ENCODE measurements at regions of chr10 and their contacts with region 1.

Region 1: GRCh38 chr10:16891375-16892313 is 74.4 kb upstream of the RSU1 start:
- DNase-seq: peak; percentile 92
- ATAC-seq: peak; percentile 87
- H3K4me3 ChIP-seq: peak overlapping the region; percentile 4 to 38; a peak in 2 of 4 replicates
- H3K27ac ChIP-seq: peak overlapping the region; percentile 67
- H3K4me1 ChIP-seq: peaks cover 13 to 25% of the 10 kb centered on the region in 2 experiments; a peak in 3 of 4 replicates
- H3K27me3 ChIP-seq: no peaks in the 10 kb centered on the region
- CTCF ChIP-seq: peak; percentile 68 to 76 (median 73)
- POLR2A ChIP-seq: peak; percentile 100
- RAD21 ChIP-seq: peak; percentile 90

Region 2: DNA sequence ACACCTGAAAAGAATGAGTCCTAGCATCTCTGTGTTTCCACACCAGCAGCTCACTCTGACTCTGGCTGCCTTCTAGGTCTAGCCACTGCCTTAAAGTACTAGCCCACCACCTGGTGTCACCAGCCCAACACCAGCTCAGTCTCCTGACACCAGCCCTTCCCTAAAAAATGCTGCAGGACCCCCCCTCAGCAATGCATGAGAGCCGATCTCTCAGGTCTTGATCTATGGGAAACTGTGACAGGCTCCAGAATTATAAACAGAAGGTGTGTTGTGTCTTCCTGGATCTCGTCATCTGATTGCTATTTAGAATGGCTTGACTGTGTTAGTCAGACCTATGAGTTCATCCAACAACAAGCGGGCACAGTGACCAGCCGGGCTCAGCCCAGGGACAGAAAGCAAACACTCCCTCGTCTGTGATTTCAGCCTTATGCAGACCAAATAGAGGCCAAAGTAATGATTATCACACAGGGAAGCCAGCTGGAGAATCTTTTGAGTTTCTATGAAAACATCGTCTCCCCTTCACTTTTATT is 171.4 kb after region 1 on chr10:
- CTCF ChIA-PET with region 1: no interaction called
- POLR2A ChIA-PET with region 1: interaction called, 8 read pairs
- RAD21 ChIA-PET with region 1: no interaction called
- intact Hi-C with region 1: loop called (anchors 1 kb)
- DNase-seq: peak; percentile 86
- ATAC-seq: peak; percentile 95
- H3K4me3 ChIP-seq: peak overlapping the region; percentile 18 to 42
- H3K27ac ChIP-seq: peak overlapping the region; percentile 4; the same call in 1 of the 2 replicates
- H3K4me1 ChIP-seq: peaks cover 37 to 48% of the 10 kb centered on the region in 2 experiments
- H3K27me3 ChIP-seq: no peaks in the 10 kb centered on the region
- CTCF ChIP-seq: no peak
- POLR2A ChIP-seq: no peak
- RAD21 ChIP-seq: peak; percentile 22

Region 3: GRCh38 chr10:17200912-17201793 is 309.5 kb after region 1 on chr10 and contains the start of gene TRDMT1:
- CTCF ChIA-PET with region 1: no interaction called
- POLR2A ChIA-PET with region 1: interaction called, 28 read pairs
- RAD21 ChIA-PET with region 1: no interaction called
- intact Hi-C with region 1: no loop called
- DNase-seq: peak; percentile 69
- ATAC-seq: peak; percentile 99
- H3K4me3 ChIP-seq: peak within 1 kb of the TSS; percentile 68 to 85
- H3K27ac ChIP-seq: peak within 1 kb of the TSS; percentile 74
- H3K4me1 ChIP-seq: peaks cover 5 to 14% of the 10 kb centered on the region in 2 experiments
- H3K27me3 ChIP-seq: no peaks in the 10 kb centered on the region
- CTCF ChIP-seq: peak in 1 of 3 experiments; percentile 17; a peak in 1 of 6 replicates
- POLR2A ChIP-seq: peak; percentile 65
- RAD21 ChIP-seq: peak; percentile 54; the same call in 1 of the 2 replicates
- total RNA-seq, gene TRDMT1: 8.6 TPM

Region 4: DNA sequence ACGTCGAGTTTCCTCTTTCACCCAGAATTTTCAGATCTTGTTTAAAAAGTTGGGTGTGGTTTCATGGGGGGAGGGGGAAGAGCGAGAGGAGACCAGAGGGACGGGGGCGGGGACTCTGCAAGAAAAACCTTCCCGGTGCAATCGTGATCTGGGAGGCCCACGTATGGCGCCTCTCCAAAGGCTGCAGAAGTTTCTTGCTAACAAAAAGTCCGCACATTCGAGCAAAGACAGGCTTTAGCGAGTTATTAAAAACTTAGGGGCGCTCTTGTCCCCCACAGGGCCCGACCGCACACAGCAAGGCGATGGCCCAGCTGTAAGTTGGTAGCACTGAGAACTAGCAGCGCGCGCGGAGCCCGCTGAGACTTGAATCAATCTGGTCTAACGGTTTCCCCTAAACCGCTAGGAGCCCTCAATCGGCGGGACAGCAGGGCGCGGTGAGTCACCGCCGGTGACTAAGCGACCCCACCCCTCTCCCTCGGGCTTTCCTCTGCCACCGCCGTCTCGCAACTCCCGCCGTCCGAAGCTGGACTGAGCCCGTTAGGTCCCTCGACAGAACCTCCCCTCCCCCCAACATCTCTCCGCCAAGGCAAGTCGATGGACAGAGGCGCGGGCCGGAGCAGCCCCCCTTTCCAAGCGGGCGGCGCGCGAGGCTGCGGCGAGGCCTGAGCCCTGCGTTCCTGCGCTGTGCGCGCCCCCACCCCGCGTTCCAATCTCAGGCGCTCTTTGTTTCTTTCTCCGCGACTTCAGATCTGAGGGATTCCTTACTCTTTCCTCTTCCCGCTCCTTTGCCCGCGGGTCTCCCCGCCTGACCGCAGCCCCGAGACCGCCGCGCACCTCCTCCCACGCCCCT is 336.7 kb after region 1 on chr10 and contains the start of gene VIM:
- CTCF ChIA-PET with region 1: interaction called, 8 read pairs
- POLR2A ChIA-PET with region 1: interaction called, 25 read pairs
- RAD21 ChIA-PET with region 1: no interaction called
- intact Hi-C with region 1: loop called (anchors 1 kb)
- DNase-seq: peak; percentile 84
- ATAC-seq: peak; percentile 76
- H3K4me3 ChIP-seq: peak within 1 kb of the TSS; percentile 24 to 43
- H3K27ac ChIP-seq: peak within 1 kb of the TSS; percentile 53
- H3K4me1 ChIP-seq: peaks cover 32 to 37% of the 10 kb centered on the region in 2 experiments
- H3K27me3 ChIP-seq: peaks cover 39% of the 10 kb centered on the region
- CTCF ChIP-seq: no peak
- POLR2A ChIP-seq: no peak
- RAD21 ChIP-seq: peak; percentile 20; the same call in 1 of the 2 replicates
- total RNA-seq, gene VIM: 7.2 TPM

Region 5: GRCh38 chr10:17249820-17250219 is 358.2 kb after region 1 on chr10:
- CTCF ChIA-PET with region 1: no interaction called
- POLR2A ChIA-PET with region 1: interaction called, 10 read pairs
- RAD21 ChIA-PET with region 1: no interaction called
- intact Hi-C with region 1: loop called (anchors 2 kb)
- DNase-seq: peak; percentile 29
- ATAC-seq: peak; percentile 72
- H3K4me3 ChIP-seq: no peak overlapping the region
- H3K27ac ChIP-seq: no peak overlapping the region
- H3K4me1 ChIP-seq: no peaks in the 10 kb centered on the region
- H3K27me3 ChIP-seq: no peaks in the 10 kb centered on the region
- CTCF ChIP-seq: peak; percentile 61 to 69 (median 67); a peak in 5 of 6 replicates
- POLR2A ChIP-seq: no peak
- RAD21 ChIP-seq: peak; percentile 83

Region 6: DNA sequence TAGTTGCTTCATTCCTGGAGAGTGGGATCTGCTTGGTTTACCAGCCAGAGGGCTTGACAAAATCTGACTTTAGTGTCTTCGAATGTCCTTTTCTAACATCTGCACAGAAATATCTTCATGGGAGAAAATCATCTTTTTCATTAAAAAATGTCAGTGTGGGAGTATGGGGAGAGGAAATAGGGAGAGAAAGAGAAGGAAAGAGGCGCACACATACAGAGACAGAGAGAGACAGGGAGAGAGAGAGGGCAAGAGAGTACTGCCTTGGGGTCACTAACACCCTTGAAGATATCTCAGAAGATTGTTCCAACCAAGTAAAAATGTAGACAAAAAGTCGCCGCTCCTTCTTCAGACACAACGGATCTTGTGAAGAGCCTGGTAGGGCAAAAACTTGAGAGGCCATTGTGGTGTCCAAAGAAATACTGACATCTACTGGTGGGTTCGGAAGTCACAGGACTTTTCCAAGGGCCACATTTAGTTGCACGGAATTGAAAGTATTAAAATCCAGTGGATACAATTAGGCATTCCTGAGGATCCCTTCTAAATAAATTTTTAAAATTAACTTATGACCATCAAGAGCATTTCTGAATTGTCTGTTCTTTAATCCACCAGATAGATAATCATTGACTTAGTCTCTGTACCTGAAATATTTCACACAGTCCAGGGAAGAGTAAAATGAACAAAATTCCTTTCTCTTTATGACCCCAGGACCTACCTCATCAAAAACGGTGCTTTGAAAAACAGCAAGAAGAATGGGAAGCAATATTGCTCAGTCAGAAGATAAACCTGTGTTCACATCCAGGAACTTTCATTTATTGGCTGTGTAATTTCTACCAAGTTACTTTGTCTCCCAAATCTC is 366.1 kb after region 1 on chr10:
- CTCF ChIA-PET with region 1: interaction called, 6 read pairs
- POLR2A ChIA-PET with region 1: interaction called, 10 read pairs
- RAD21 ChIA-PET with region 1: no interaction called
- intact Hi-C with region 1: loop called (anchors 1 kb)
- DNase-seq: peak; percentile 60
- ATAC-seq: peak; percentile 94
- H3K4me3 ChIP-seq: peak overlapping the region in 1 of 2 experiments; percentile 17; a peak in 1 of 4 replicates
- H3K27ac ChIP-seq: no peak overlapping the region
- H3K4me1 ChIP-seq: peaks cover 2 to 8% of the 10 kb centered on the region in 2 experiments; a peak in 3 of 4 replicates
- H3K27me3 ChIP-seq: no peaks in the 10 kb centered on the region
- CTCF ChIP-seq: peak; percentile 74 to 83 (median 83)
- POLR2A ChIP-seq: no peak
- RAD21 ChIP-seq: peak; percentile 91

Region 7: GRCh38 chr10:17617031-17617911 is 725.6 kb after region 1 on chr10 and contains the start of gene HACD1:
- CTCF ChIA-PET with region 1: no interaction called
- POLR2A ChIA-PET with region 1: no interaction called
- RAD21 ChIA-PET with region 1: no interaction called
- intact Hi-C with region 1: no loop called
- DNase-seq: peak; percentile 59
- ATAC-seq: peak; percentile 85
- H3K4me3 ChIP-seq: peak within 1 kb of the TSS; percentile 54 to 86
- H3K27ac ChIP-seq: peak within 1 kb of the TSS; percentile 97
- H3K4me1 ChIP-seq: peaks cover 7 to 21% of the 10 kb centered on the region in 2 experiments; a peak in 3 of 4 replicates
- H3K27me3 ChIP-seq: no peaks in the 10 kb centered on the region
- CTCF ChIP-seq: peak in 2 of 3 experiments; percentile 18 to 20; a peak in 3 of 6 replicates
- POLR2A ChIP-seq: peak; percentile 83
- RAD21 ChIP-seq: peak; percentile 23; the same call in 1 of the 2 replicates
- total RNA-seq, gene HACD1: 21.6 TPM

Measured in HCT116 (cell line).